Heart left ventricle (tissue), 16 donors: ENCODE measurements at regions of chr16 and their contacts with region 1.

Region 1: GRCh38 chr16:87853411-87854052 is 15.8 kb downstream of the SLC7A5 start:
- DNase-seq: peak; percentile 90 to 96 (median 95)
- ATAC-seq: peak; percentile 78 to 92 (median 89)
- H3K4me3 ChIP-seq: peak overlapping the region in 9 of 12 donors; percentile 15 to 42 (median 20)
- H3K27ac ChIP-seq: peak overlapping the region in 9 of 12 donors; percentile 5 to 89 (median 60)
- H3K4me1 ChIP-seq: peaks cover 0 to 65% (median 17%) of the 10 kb centered on the region in 12 donors
- H3K27me3 ChIP-seq: no peaks in the 10 kb centered on the region
- CTCF ChIP-seq: no peak
- POLR2A ChIP-seq: peak in 1 of 2 donors; percentile 66

Region 2: DNA sequence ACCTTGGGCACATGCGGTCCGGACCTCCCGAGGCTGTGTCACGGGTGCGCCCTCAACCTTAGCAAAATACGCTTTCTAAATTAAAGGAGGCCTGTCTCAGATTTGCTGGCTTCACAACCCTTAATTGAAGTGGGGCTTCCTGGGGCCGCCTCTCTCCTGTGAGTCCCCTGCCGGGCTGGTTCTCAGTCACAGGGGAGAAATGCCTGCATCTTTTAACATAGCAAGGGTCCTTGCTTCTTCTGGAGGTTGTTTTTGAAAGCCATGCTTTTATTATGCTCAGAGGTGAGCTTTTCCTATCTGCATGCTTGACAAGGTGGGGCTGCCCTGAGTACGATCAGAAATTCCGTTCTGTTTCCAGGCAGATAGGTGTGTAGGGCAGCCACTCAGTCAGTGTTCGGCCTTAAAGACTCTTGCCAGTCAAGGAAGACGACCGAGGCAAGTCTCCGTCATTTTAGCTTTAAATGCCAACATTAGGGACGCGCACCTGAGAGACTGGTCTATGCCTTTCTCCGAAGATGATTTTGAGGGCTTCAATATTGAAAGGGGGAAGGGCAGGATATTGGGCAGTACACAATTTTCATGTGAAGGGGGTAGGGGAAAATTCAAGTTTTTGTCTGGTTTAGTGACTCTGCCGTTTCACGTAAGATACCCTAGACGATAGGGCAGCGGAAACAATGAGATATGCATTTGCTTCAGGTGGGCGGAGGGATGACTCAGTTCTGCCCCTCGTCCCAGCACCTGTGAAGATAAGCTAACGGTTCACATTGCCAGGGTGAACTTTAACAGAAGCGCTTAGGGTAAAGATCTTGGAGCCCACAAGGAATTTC is 21.3 kb after region 1 on chr16:
- intact Hi-C with region 1: loop called in 2 of 10 experiments (anchors 1 to 2 kb)
- DNase-seq: no peak
- ATAC-seq: no peak
- H3K4me3 ChIP-seq: no peak overlapping the region
- H3K27ac ChIP-seq: no peak overlapping the region
- H3K4me1 ChIP-seq: peaks cover 0 to 8% (median 2%) of the 10 kb centered on the region in 12 donors
- H3K27me3 ChIP-seq: peaks cover 0 to 21% (median 5%) of the 10 kb centered on the region in 9 donors
- CTCF ChIP-seq: no peak
- POLR2A ChIP-seq: no peak

Region 3: GRCh38 chr16:87895641-87896141 is 42.2 kb after region 1 on chr16:
- intact Hi-C with region 1: loop called in 1 of 10 experiments (anchors 10 kb)
- DNase-seq: no peak
- ATAC-seq: peak in 3 of 4 donors; percentile 15 to 23 (median 16)
- H3K4me3 ChIP-seq: no peak overlapping the region
- H3K27ac ChIP-seq: peak overlapping the region in 1 of 12 donors; percentile 42
- H3K4me1 ChIP-seq: peaks cover 0 to 30% (median 0%) of the 10 kb centered on the region in 12 donors
- H3K27me3 ChIP-seq: no peaks in the 10 kb centered on the region
- CTCF ChIP-seq: no peak
- POLR2A ChIP-seq: no peak